IMR-90 (cell line): ENCODE measurements at regions of chr3 and their contacts with region 1.

Region 1: DNA sequence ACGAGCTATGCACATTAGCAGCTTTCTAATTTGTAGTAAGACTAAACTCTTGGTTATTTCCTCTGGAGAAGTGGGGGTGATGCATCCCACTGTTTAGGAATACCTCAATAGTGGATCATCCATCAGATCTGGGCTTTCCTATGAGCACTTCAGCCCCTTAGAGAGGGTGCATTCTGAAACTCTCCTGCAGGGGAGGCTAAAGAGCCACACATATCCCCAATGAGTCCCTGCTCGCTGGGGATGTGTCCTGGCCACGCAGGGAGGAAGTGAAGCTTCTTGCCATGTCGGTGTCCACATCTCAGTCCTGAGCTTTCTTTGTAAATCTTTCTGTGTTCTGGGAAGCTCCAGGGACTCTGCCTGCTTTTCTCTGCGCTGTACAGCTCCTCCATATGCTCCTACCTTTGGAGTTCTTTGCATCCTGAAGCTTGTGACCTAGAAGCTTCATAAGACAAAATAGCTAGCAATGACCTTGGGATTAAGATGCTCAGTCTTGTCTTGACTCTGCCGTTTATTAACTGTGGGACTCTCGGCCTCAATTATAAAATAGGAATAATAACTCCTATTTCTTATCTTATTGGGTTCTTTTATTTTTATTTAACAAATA is 28.3 kb upstream of the MASP1 start:
- DNase-seq: peak; percentile 70
- ATAC-seq: peak; percentile 94
- H3K4me3 ChIP-seq: no peak overlapping the region
- H3K27ac ChIP-seq: no peak overlapping the region
- H3K4me1 ChIP-seq: peaks cover 2% of the 10 kb centered on the region; the same call in 1 of the 2 replicates
- H3K27me3 ChIP-seq: peaks cover 9% of the 10 kb centered on the region
- CTCF ChIP-seq: peak; percentile 88
- POLR2A ChIP-seq: no peak
- RAD21 ChIP-seq: peak; percentile 81

Region 2: DNA sequence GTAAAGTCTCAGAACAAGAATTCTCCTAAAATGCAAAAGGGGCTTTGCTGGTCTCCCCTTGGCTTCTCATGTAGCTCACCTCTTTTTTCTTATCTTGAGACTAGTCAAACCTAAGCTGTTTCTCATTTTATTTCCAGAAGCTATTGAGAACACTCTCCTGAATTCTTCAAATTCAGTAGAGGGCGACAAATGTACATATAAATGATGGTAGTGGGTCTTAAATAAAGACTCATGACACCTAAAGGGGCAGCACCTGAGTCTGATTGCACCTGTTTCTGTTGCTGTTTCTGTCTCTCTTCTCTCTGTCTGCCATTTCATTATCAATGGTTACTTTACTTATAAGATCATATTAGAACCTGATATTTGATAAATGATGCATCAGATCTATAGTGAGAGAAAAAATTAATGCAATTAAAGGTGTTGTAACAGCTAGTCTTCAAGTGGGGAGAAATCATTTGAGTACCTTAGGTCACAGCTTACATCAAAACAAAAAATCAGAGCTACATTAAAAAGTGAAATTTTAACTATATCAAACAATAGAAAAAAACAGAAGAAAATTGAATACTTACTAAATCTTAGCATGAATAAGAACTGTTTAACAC is 470.3 kb before region 1 on chr3:
- CTCF ChIA-PET with region 1: no interaction called
- POLR2A ChIA-PET with region 1: no interaction called
- dilution Hi-C with region 1: no loop called
- in situ Hi-C with region 1: no loop called
- intact Hi-C with region 1: loop called (anchors 10 kb)
- DNase-seq: peak; percentile 38
- ATAC-seq: 0 out of 2 replicates have a peak, but pooled peaks have one; percentile 37
- H3K4me3 ChIP-seq: no peak overlapping the region
- H3K27ac ChIP-seq: no peak overlapping the region
- H3K4me1 ChIP-seq: no peaks in the 10 kb centered on the region
- H3K27me3 ChIP-seq: peaks cover 32% of the 10 kb centered on the region
- CTCF ChIP-seq: peak; percentile 42
- POLR2A ChIP-seq: no peak
- RAD21 ChIP-seq: peak; percentile 45

Region 3: DNA sequence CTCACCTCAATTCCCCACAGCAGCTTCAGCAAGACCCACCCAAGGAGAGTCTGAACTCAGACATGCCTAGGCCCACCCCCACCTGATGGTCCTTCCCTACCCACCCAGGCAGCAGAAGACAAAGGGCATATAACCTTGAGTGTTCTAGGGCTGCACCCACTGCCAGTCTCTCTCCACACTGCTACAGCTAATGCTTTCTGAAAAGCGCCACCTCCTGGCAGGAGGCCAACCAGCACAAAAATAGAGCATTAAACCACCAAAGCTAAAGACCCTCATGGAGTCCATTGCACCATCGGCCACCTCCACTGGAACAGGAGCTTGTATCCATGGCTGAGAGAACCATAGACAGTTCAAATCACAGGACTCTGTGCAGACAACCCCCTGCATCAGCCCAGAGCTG is 169.2 kb before region 1 on chr3:
- CTCF ChIA-PET with region 1: no interaction called
- POLR2A ChIA-PET with region 1: no interaction called
- dilution Hi-C with region 1: no loop called
- in situ Hi-C with region 1: no loop called
- intact Hi-C with region 1: no loop called
- DNase-seq: no peak
- ATAC-seq: no peak
- H3K4me3 ChIP-seq: no peak overlapping the region
- H3K27ac ChIP-seq: no peak overlapping the region
- H3K4me1 ChIP-seq: no peaks in the 10 kb centered on the region
- H3K27me3 ChIP-seq: peaks cover 7% of the 10 kb centered on the region
- CTCF ChIP-seq: no peak
- POLR2A ChIP-seq: no peak
- RAD21 ChIP-seq: no peak

Region 4: DNA sequence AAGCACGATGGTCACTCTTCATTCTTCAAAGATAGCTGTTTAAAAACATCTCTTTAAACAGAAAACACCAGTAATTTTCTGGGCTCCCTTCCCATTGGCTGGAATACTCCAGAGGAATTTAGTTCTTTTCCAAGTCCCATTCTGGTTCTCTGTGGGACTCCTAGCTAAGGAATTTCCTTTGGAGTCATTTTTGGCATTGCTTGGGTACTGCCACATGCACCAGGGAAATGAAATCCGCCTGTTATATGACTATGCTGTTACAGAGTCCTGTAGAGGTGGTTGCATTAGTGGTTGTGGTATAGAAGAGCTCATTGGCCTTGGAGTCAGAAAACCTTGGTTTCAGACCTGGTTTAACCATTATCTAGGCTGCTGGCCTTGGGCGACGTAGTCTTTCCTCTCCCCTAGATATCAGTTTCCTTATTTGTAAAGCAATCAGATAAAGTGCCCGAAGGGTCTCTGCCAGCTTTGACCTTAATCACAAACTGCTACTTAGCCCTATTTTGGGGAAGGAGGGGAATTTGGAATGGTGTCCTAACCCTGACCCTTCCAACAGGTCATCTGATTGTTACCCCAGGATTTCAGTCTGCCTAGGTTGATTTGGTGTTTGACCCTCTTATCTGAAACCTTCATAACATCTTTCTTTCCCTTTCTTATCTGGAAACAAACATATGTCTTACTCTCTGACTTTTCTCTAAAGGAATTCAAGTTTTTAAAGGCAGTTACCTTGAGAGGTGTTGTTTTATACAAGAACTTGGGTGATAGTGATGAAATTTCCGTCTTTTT is 109.1 kb before region 1 on chr3:
- CTCF ChIA-PET with region 1: interaction called, 3 read pairs
- POLR2A ChIA-PET with region 1: no interaction called
- dilution Hi-C with region 1: no loop called
- in situ Hi-C with region 1: loop called (anchors 5 kb)
- intact Hi-C with region 1: no loop called
- DNase-seq: peak; percentile 41
- ATAC-seq: peak; percentile 83
- H3K4me3 ChIP-seq: no peak overlapping the region
- H3K27ac ChIP-seq: no peak overlapping the region
- H3K4me1 ChIP-seq: peaks cover 8% of the 10 kb centered on the region
- H3K27me3 ChIP-seq: no peaks in the 10 kb centered on the region; the same call in 1 of the 2 replicates
- CTCF ChIP-seq: no peak
- POLR2A ChIP-seq: no peak
- RAD21 ChIP-seq: no peak

Region 5: GRCh38 chr3:187274977-187275338 is 44.8 kb before region 1 on chr3:
- CTCF ChIA-PET with region 1: no interaction called
- POLR2A ChIA-PET with region 1: no interaction called
- dilution Hi-C with region 1: no loop called
- in situ Hi-C with region 1: no loop called
- intact Hi-C with region 1: no loop called
- DNase-seq: no peak
- ATAC-seq: no peak
- H3K4me3 ChIP-seq: no peak overlapping the region
- H3K27ac ChIP-seq: no peak overlapping the region
- H3K4me1 ChIP-seq: peaks cover 2% of the 10 kb centered on the region; the same call in 1 of the 2 replicates
- H3K27me3 ChIP-seq: no peaks in the 10 kb centered on the region
- CTCF ChIP-seq: no peak
- POLR2A ChIP-seq: no peak
- RAD21 ChIP-seq: no peak

Region 6: DNA sequence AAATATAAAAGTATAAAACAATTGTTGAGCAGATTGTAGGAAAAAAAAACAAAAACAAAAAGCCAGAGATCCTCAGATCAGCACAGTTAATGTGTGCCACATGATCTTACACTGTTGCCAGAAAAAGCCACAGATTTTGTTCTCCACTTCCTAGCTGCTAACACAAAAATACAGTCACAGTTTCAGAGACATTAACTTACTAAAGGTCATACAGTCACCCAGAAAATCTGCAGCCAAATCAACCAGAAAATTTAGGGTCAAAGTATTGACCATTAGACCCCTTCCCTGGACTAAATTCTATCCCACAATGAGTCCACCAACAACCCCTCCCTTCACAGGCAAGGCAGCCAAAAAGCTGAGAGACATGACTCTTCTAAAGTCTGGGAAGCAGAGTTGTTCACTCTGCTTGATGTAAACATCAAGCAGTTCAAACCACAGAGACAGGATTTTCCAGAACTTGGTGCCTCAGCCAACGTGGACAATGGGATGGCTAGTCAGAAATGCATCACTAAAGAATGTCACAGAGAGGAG is 291.2 kb after region 1 on chr3:
- CTCF ChIA-PET with region 1: interaction called, 11 read pairs
- POLR2A ChIA-PET with region 1: no interaction called
- dilution Hi-C with region 1: no loop called
- in situ Hi-C with region 1: no loop called
- intact Hi-C with region 1: loop called (anchors 1 kb)
- DNase-seq: peak; percentile 6
- ATAC-seq: no peak
- H3K4me3 ChIP-seq: no peak overlapping the region
- H3K27ac ChIP-seq: no peak overlapping the region
- H3K4me1 ChIP-seq: no peaks in the 10 kb centered on the region
- H3K27me3 ChIP-seq: peaks cover 6% of the 10 kb centered on the region
- CTCF ChIP-seq: no peak
- POLR2A ChIP-seq: no peak
- RAD21 ChIP-seq: no peak

Region 7: DNA sequence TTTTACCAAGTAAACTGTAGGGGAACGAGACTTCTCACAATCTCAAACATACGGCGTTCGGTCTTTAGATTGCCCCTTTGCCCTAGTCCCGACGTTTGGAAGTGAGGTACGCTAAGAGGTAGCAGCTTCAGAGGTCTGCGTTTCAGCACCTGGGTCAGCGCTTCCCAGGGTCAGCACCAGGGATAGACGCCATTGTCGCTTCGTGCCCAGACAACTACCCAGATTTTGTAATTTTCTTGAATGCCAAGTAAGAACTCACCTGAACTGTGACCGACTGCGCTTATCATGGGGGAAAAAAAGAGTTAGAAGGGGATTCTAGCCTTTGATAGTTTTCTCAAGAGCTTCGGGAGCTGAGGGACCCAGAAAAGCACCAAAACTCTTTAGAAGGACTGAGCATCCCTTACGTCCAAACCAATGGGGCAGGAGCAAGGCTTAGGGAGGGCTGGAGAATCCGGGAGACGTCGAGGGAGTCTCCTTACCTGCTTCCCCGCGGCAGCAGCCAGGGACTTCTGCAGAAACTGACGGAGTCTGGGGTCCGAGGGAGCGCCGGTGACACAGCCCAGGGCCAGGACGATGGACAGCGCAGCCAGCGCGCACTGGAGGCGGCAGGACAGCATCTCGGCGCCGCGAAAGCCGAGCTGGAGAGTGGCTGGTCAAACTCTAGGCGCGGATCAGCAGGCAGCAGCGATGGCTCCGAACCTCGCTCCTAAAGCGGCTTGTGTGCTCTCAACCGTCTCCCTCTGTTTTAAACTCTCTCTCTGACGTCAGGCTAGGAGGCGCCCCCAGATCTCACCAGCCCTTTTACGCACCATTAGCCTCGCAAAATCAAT is 350.1 kb after region 1 on chr3 and contains the start of gene SST:
- CTCF ChIA-PET with region 1: interaction called, 168 read pairs
- POLR2A ChIA-PET with region 1: no interaction called
- dilution Hi-C with region 1: loop called (anchors 25 kb)
- in situ Hi-C with region 1: loop called (anchors 5 kb)
- intact Hi-C with region 1: no loop called
- DNase-seq: peak; percentile 47
- ATAC-seq: peak; percentile 90
- H3K4me3 ChIP-seq: no peak within 1 kb of the TSS
- H3K27ac ChIP-seq: no peak within 1 kb of the TSS
- H3K4me1 ChIP-seq: no peaks in the 10 kb centered on the region
- H3K27me3 ChIP-seq: peaks cover 18% of the 10 kb centered on the region
- CTCF ChIP-seq: no peak
- POLR2A ChIP-seq: no peak
- RAD21 ChIP-seq: no peak
- total RNA-seq, gene SST: not detected in 2 replicates

Region 8: DNA sequence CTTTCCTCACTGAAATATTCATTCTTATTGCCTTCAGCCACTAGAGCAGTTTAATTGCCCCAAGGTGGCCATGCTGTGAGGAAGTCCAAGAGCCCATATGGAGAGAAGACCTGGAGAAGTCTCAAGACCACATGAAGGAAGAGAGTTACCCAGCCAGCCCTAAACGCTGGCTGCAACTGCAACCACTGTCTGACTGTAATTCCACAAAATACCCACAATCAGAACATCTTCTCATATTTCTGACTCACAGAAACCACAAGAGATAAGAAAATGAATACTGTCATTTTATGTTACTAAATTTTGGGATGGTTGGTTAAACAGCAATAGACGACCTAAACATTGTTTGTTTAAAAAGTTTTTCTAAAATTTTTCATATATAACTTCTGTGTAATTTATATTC is 365.1 kb after region 1 on chr3:
- CTCF ChIA-PET with region 1: interaction called, 168 read pairs
- POLR2A ChIA-PET with region 1: interaction called, 5 read pairs
- dilution Hi-C with region 1: loop called (anchors 25 kb)
- in situ Hi-C with region 1: no loop called
- intact Hi-C with region 1: no loop called
- DNase-seq: peak; percentile 24
- ATAC-seq: no peak; the same call in 1 of the 2 replicates
- H3K4me3 ChIP-seq: no peak overlapping the region
- H3K27ac ChIP-seq: no peak overlapping the region
- H3K4me1 ChIP-seq: no peaks in the 10 kb centered on the region
- H3K27me3 ChIP-seq: peaks cover 16% of the 10 kb centered on the region
- CTCF ChIP-seq: no peak
- POLR2A ChIP-seq: no peak
- RAD21 ChIP-seq: no peak